ENCODE measurements at regions of chr13 and their contacts with region 1.

Region 1: GRCh38 chr13:50081679-50082425 is 66.6 kb downstream of the KCNRG start:
- DNase-seq: peak; percentile 99
- ATAC-seq: peak; percentile 95
- H3K4me3 ChIP-seq: peak overlapping the region; percentile 67 to 90
- H3K27ac ChIP-seq: peak overlapping the region; percentile 62 to 75
- H3K4me1 ChIP-seq: peaks cover 0 to 1% of the 10 kb centered on the region in 2 donors
- H3K27me3 ChIP-seq: no peaks in the 10 kb centered on the region

Region 2: GRCh38 chr13:49996951-49997895 is 84.6 kb before region 1 on chr13 and contains the start of gene TRIM13:
- intact Hi-C with region 1: loop called (anchors 2 to 5 kb)
- DNase-seq: peak; percentile 94 to 95
- ATAC-seq: peak; percentile 94
- H3K4me3 ChIP-seq: peak within 1 kb of the TSS; percentile 81 to 98
- H3K27ac ChIP-seq: peak within 1 kb of the TSS; percentile 80 to 94
- H3K4me1 ChIP-seq: peaks cover 7% of the 10 kb centered on the region in 2 donors
- H3K27me3 ChIP-seq: no peaks in the 10 kb centered on the region
- total RNA-seq, gene TRIM13: 25.0 to 27.6 TPM

Region 3: DNA sequence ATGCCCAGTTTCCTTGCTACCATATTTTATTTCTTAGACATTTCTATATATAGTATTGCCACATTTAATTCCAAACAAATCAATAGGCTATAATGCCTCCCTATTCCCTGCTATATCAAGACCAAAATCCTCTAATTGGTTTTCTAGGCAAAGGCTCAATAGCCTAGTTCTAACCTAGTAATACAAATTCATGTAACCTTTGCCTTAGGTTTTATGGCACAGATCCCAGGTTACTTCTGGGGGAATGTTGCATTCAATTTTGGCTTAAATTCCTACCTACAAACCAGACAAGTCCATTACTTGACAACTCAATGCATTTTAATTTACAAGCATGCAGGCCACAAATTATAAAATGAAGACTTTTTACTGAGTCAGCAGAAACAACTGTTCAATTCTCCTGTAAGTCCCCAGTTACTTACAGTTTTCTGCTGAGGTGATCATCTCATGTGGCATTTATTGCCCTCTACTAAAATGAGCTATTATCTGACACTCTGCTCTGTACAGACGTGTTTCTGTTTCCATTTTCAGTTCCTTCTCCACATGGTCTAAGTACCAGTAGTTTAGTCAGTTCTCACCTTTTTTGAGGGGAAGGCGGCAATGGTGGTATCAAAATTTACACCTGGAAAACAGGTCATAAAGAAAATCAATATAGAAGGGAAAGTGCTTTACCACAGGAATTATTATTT is 54.9 kb before region 1 on chr13:
- intact Hi-C with region 1: no loop called
- DNase-seq: no peak
- ATAC-seq: no peak
- H3K4me3 ChIP-seq: no peak overlapping the region
- H3K27ac ChIP-seq: no peak overlapping the region
- H3K4me1 ChIP-seq: no peaks in the 10 kb centered on the region
- H3K27me3 ChIP-seq: no peaks in the 10 kb centered on the region

Region 4: DNA sequence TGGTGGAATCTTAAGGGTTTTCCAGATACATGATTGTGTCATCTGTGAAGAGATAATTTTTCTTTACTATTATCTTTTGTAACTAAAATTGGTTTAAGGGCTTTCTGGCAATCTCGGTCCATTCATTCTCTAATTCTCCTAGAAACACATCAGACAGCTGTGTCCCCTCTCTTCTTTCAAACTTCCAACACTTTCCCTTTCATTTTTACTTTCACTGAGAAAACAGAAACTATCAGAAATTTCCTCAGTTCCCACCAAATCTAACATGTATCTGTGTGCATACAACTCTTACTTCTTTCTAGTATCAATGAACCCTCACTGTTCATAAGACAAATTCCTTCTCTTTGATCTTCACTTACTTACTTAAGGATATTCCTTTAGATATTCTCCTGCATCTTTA is 26.4 kb before region 1 on chr13:
- intact Hi-C with region 1: no loop called
- DNase-seq: no peak
- ATAC-seq: no peak
- H3K4me3 ChIP-seq: no peak overlapping the region
- H3K27ac ChIP-seq: no peak overlapping the region
- H3K4me1 ChIP-seq: peaks cover 0 to 5% of the 10 kb centered on the region in 2 donors
- H3K27me3 ChIP-seq: no peaks in the 10 kb centered on the region

Region 5: GRCh38 chr13:50357586-50358118 is 275.8 kb after region 1 on chr13:
- intact Hi-C with region 1: loop called in 1 of 2 experiments (anchors 10 kb)
- DNase-seq: no peak
- ATAC-seq: peak; percentile 79
- H3K4me3 ChIP-seq: no peak overlapping the region
- H3K27ac ChIP-seq: peak overlapping the region; percentile 56 to 71
- H3K4me1 ChIP-seq: peaks cover 0 to 9% of the 10 kb centered on the region in 2 donors
- H3K27me3 ChIP-seq: no peaks in the 10 kb centered on the region

Region 6: DNA sequence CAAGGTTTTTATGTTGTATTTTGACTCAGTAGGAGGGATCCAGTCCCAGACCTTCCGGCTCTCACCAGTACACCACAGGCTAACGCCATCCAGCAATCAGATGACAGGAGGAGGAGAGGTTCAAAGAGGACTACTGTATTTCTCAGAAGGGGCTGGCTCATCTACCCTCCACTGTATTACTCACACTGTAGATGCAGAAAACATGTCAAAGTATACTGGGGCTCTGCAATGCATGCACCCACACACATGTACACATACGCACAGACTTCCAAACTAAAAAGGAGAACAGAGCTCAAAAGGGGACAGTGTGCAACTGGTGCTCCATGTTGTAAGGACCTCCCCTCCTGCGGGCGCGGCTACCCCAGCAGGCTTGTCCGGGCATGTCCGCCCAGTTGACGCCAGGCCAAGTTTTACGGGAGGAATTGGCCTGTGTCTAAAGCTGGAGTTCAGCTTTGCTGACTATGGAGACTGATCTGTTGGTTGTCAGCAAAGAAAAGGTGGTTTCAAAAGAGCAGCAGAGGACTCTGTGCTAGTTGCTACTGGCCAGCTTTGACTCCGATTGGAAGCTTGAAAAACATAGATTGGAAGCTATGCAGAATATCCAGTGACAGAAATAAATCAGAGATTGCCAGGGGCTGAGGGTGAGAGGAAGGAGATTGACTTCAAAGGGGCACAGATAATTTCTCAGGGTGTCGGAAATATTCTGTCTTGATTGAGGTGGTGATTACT is 447.5 kb after region 1 on chr13:
- intact Hi-C with region 1: loop called (anchors 2 to 5 kb)
- DNase-seq: peak; percentile 92
- ATAC-seq: peak; percentile 82
- H3K4me3 ChIP-seq: no peak overlapping the region
- H3K27ac ChIP-seq: peak overlapping the region in 1 of 2 donors; percentile 4
- H3K4me1 ChIP-seq: peaks cover 0 to 4% of the 10 kb centered on the region in 2 donors
- H3K27me3 ChIP-seq: no peaks in the 10 kb centered on the region

Region 7: GRCh38 chr13:50911937-50912795 is 830.3 kb after region 1 on chr13:
- intact Hi-C with region 1: loop called in 1 of 2 experiments (anchors 10 kb)
- DNase-seq: peak; percentile 93 to 95
- ATAC-seq: peak; percentile 67
- H3K4me3 ChIP-seq: no peak overlapping the region
- H3K27ac ChIP-seq: no peak overlapping the region
- H3K4me1 ChIP-seq: no peaks in the 10 kb centered on the region
- H3K27me3 ChIP-seq: no peaks in the 10 kb centered on the region